Activated B cell treated with CpG ODN at 0.5 μM for 24 hours (primary cell): ENCODE measurements at regions of chr6 and their contacts with region 1.

Region 1: GRCh38 chr6:132830334-132830751 is 16.0 kb downstream of the RPS12 start:
- DNase-seq: no peak
- ATAC-seq: no peak
- H3K4me3 Mint-ChIP-seq: no peak overlapping the region
- H3K27ac Mint-ChIP-seq: no peak overlapping the region
- H3K4me1 Mint-ChIP-seq: no peaks in the 10 kb centered on the region
- H3K27me3 Mint-ChIP-seq: no peaks in the 10 kb centered on the region
- CTCF ChIP-seq: no peak

Region 2: DNA sequence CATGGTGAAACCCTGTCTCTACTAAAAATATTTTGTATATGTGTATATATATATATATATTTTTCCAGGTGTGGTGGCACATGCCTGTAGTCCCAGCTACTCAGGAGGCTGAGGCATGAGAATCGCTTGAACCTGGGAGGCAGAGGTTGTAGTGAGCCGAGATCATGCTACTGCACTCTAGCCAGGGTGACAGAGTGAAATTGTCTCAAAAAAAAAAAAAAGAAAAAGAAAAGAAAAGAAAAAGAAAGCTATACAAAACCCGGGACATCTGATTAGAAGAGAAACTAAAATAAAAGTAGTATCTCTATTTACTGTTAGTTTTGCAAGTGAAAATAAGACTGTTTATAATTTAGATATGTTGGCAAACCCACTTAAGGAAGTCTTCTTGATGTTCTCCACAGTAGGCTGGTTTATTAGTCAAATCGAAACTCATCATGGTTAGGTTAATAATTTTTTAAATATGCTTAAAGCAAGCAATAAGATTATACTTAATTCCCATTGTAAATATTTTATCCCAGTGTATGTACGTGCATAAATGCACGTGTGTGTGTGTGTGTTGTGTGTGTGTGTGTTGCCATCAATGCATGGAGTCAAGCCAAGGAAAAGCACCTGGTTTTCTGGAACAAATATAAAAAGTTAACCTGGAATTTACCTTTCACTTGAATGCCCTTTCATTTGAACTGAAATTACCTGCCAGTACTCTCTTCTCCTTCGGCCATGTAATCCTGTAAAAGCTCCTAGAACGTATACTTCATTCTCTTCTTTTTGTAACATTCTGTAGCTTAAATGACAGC is 79.7 kb before region 1 on chr6:
- CTCF ChIA-PET with region 1: no interaction called
- POLR2A ChIA-PET with region 1: no interaction called
- intact Hi-C with region 1: no loop called
- DNase-seq: no peak
- ATAC-seq: peak; percentile 66
- H3K4me3 Mint-ChIP-seq: peak overlapping the region; percentile 66
- H3K27ac Mint-ChIP-seq: peak overlapping the region; percentile 84
- H3K4me1 Mint-ChIP-seq: peaks cover 42% of the 10 kb centered on the region
- H3K27me3 Mint-ChIP-seq: no peaks in the 10 kb centered on the region
- CTCF ChIP-seq: no peak

Region 3: GRCh38 chr6:132798869-132799538 is 31.3 kb before region 1 on chr6:
- CTCF ChIA-PET with region 1: no interaction called
- POLR2A ChIA-PET with region 1: no interaction called
- intact Hi-C with region 1: no loop called
- DNase-seq: peak; percentile 52
- ATAC-seq: peak; percentile 76
- H3K4me3 Mint-ChIP-seq: no peak overlapping the region
- H3K27ac Mint-ChIP-seq: no peak overlapping the region
- H3K4me1 Mint-ChIP-seq: peaks cover 14% of the 10 kb centered on the region
- H3K27me3 Mint-ChIP-seq: no peaks in the 10 kb centered on the region
- CTCF ChIP-seq: no peak

Region 4: DNA sequence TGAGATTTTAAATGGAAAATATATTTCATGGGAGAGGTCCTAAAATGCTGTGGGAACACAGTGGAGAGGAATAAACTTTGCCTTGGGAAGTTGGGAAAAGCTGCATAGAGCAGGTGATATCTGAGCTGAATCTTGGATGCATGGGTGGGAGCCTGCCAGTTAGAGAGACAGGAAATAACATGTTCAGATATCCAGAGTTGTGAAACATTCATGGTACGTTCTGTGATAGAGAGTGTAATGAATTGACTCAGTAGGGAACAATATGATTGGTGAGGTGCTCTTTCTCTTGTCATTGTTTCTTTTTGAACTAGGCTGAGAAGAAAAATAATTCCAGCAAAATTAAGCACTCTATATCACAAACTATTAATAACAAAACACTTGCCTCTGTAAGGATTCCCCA is 56.9 kb after region 1 on chr6:
- CTCF ChIA-PET with region 1: no interaction called
- POLR2A ChIA-PET with region 1: no interaction called
- intact Hi-C with region 1: no loop called
- DNase-seq: no peak
- ATAC-seq: no peak
- H3K4me3 Mint-ChIP-seq: no peak overlapping the region
- H3K27ac Mint-ChIP-seq: no peak overlapping the region
- H3K4me1 Mint-ChIP-seq: no peaks in the 10 kb centered on the region
- H3K27me3 Mint-ChIP-seq: peaks cover 16% of the 10 kb centered on the region
- CTCF ChIP-seq: no peak

Region 5: GRCh38 chr6:133040094-133040802 is 209.9 kb after region 1 on chr6:
- CTCF ChIA-PET with region 1: no interaction called
- POLR2A ChIA-PET with region 1: no interaction called
- intact Hi-C with region 1: loop called (anchors 2 kb)
- DNase-seq: no peak
- ATAC-seq: no peak
- H3K4me3 Mint-ChIP-seq: no peak overlapping the region
- H3K27ac Mint-ChIP-seq: no peak overlapping the region
- H3K4me1 Mint-ChIP-seq: no peaks in the 10 kb centered on the region
- H3K27me3 Mint-ChIP-seq: peaks cover 2% of the 10 kb centered on the region
- CTCF ChIP-seq: no peak